Naive thymus-derived CD4-positive, alpha-beta T cell (primary cell): ENCODE measurements at regions of chrX and their contacts with region 1.

Region 1: GRCh38 chrX:20181598-20182329 is 40.1 kb upstream of the EIF1AX start:
- DNase-seq: peak in 2 of 9 donors; percentile 7 to 11
- ATAC-seq: no peak
- H3K4me3 ChIP-seq: no peak overlapping the region
- H3K4me3 Mint-ChIP-seq: peak overlapping the region in 1 of 10 donors; percentile 21
- H3K27ac ChIP-seq: no peak overlapping the region
- H3K27ac Mint-ChIP-seq: peak overlapping the region; percentile 5 to 83 (median 54)
- H3K4me1 ChIP-seq: peaks cover 0 to 6% of the 10 kb centered on the region in 2 donors
- H3K4me1 Mint-ChIP-seq: peaks cover 6 to 25% (median 22%) of the 10 kb centered on the region in 7 donors
- H3K27me3 ChIP-seq: no peaks in the 10 kb centered on the region
- H3K27me3 Mint-ChIP-seq: no peaks in the 10 kb centered on the region

Region 2: DNA sequence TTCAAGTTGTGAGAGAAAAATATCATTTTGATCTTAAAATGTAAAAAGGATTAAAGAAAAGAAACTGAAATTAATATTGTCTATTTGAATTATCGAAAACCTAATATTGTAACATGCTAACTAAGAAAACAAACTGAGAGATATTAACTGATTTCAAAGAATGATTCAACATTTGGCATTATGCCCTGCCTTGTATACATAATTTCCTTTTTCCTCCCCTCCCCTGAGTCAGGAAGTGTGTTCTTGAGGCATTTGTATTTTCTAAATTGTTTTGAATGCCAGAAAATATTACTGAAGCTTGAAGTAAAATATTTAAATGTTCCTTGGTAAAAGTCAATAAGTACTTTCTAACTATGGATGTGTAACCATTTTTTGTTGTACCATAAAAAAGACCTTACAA is 35.5 kb after region 1 on chrX:
- CTCF ChIA-PET with region 1: no interaction called
- POLR2A ChIA-PET with region 1: no interaction called
- intact Hi-C with region 1: loop called in 1 of 2 experiments (anchors 5 kb)
- DNase-seq: peak in 3 of 9 donors; percentile 1 to 17 (median 8)
- ATAC-seq: no peak
- H3K4me3 ChIP-seq: no peak overlapping the region
- H3K4me3 Mint-ChIP-seq: peak overlapping the region in 2 of 10 donors; percentile 27 to 48
- H3K27ac ChIP-seq: no peak overlapping the region
- H3K27ac Mint-ChIP-seq: no peak overlapping the region
- H3K4me1 ChIP-seq: peaks cover 8 to 17% of the 10 kb centered on the region in 2 donors
- H3K4me1 Mint-ChIP-seq: peaks cover 11 to 79% (median 69%) of the 10 kb centered on the region in 7 donors
- H3K27me3 ChIP-seq: no peaks in the 10 kb centered on the region
- H3K27me3 Mint-ChIP-seq: no peaks in the 10 kb centered on the region

Region 3: DNA sequence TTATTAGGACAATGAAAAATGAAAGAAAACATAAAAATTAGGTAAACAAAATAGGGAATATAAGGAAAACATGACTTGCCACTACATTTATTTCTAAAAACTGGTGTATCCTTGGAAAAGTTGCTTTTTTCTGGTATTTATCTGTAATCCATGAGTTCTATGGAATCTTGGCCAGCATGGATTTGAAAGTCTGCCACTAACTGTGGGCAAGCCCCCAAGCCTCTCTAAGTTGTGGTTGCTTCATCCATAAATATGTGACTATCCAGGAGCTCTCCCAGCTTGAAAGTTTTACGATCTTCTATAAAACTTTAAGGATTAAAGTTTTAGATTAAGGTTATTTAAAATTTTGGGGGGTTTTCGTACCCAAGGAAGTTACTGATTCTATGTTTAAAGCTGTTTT is 63.2 kb after region 1 on chrX:
- CTCF ChIA-PET with region 1: no interaction called
- POLR2A ChIA-PET with region 1: no interaction called
- intact Hi-C with region 1: loop called in 1 of 2 experiments (anchors 5 kb)
- DNase-seq: no peak
- ATAC-seq: no peak
- H3K4me3 ChIP-seq: no peak overlapping the region
- H3K4me3 Mint-ChIP-seq: no peak overlapping the region
- H3K27ac ChIP-seq: no peak overlapping the region
- H3K27ac Mint-ChIP-seq: no peak overlapping the region
- H3K4me1 ChIP-seq: peaks cover 0 to 6% of the 10 kb centered on the region in 2 donors
- H3K4me1 Mint-ChIP-seq: peaks cover 0 to 51% (median 38%) of the 10 kb centered on the region in 7 donors
- H3K27me3 ChIP-seq: no peaks in the 10 kb centered on the region
- H3K27me3 Mint-ChIP-seq: no peaks in the 10 kb centered on the region